Esophagus muscularis mucosa (tissue), 4 donors: ENCODE measurements at regions of chr5 and their contacts with region 1.

Region 1: DNA sequence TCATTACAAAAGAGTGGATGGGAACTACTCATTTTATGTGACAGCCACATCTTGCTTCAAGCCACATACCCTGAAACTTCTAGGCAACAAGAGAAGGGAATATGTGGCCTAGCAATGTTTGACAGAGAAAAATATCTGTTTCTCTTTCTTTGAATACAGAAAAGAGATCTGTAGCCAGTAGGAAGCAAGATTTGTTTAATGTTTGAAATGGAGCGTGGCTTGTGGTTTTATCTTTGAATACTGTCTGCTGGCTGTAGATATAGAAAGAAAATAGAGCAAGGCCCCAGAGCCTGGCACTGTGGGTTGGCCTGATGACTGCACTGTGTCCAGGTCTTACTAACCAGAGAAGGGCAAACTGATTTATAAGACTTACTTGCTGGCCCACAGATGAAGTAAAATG is 133.8 kb downstream of the ARHGEF28 start:
- DNase-seq: no peak
- H3K4me3 ChIP-seq: no peak overlapping the region
- H3K27ac ChIP-seq: peak overlapping the region; percentile 38 to 65 (median 54)
- H3K4me1 ChIP-seq: peaks cover 0 to 13% (median 8%) of the 10 kb centered on the region in 4 donors
- H3K27me3 ChIP-seq: no peaks in the 10 kb centered on the region
- CTCF ChIP-seq: no peak
- EP300 ChIP-seq: no peak
- POLR2A ChIP-seq: no peak

Region 2: DNA sequence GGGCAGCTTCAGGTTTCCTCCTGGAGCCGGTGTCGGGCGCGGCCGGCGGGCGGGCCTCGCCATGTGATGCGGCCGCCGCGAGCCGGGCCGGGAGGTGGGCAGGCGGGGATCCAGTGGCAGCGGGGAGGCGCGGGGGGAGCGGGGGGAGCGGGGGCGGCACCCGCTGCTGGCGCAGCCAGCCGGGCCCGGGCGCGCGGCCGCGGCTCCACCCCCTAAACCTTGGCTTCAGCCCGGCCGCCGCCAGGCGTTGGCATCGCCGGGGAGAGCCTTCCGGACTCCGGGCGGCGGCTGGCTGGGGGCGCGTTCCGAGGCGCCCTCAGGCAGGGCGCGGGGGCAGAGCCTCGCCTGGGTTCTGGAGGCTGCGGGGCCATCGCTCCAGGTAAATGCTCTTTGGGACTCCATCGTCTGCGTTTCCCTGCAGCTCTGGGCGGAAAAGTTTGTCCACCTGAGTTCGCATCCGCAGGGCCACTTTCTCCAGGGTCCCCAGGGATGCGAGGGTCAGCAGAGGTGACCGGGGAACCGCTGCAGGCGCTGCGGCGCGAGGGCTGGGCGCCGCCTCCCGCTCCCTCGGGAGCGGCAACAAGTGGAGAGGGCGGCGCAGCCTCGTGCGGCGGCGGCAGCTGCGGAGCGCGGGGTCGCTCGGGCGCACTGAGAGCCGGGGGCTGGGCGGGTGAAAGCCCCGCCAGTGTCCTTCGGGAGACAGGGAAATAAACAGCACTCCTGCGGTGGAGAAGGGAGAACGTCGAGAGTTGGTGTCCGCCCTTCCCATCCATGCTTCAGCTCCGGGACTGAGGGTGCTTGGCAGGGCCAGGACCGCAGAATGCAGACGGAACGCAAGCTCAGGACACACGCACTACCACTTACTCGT is 133.6 kb before region 1 on chr5 and contains the start of gene ARHGEF28:
- intact Hi-C with region 1: loop called (anchors 10 kb)
- DNase-seq: no peak
- H3K4me3 ChIP-seq: peak within 1 kb of the TSS; percentile 76 to 85 (median 80)
- H3K27ac ChIP-seq: peak within 1 kb of the TSS; percentile 83 to 90 (median 86)
- H3K4me1 ChIP-seq: peaks cover 7 to 27% (median 25%) of the 10 kb centered on the region in 4 donors
- H3K27me3 ChIP-seq: no peaks in the 10 kb centered on the region
- CTCF ChIP-seq: no peak
- EP300 ChIP-seq: no peak
- POLR2A ChIP-seq: no peak
- total RNA-seq, gene ARHGEF28: 12.7 to 31.2 (median 19.2) TPM